HepG2 (cell line): ENCODE measurements at regions of chr16 and their contacts with region 1.

Region 1: DNA sequence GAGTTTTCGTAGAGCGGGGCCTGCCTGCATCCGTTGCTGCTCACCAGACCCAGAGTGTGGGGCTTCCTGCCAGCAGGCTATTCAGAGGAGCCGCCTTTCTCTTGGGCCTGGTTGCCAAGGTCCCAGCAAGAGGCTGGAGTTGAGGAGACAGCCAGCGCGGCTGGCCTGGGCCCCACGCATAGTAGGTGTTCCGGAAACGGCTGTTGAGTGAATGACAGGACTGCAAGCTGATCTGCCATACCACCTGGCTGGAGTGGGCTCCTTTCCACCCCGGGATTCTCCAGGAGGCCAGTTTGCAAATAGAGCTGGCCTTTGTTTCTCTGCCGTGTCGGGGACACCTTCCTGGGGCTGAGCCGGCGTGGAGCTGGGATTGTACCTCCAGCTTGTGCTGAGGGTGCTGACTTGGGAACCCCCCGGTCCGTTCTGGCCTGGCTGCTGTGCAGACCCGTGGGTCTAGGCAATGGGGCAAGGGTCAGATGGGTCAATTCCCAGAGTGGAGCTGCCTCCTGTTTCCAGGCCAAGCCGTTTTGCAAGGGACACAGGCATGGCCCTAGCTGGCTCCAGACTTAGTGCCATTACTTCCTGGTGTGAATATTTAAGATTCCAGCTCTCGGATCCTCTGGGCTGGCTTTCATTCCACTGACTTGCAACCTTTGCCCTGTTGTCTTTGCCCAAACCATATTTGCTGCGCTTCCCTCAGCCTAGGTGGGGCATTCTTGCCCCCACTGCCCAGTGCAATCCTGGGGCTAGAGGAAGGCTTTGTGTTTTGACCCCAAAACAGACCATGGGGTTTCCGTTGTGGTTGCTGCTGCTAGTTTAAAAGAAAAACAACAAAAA is 68.8 kb downstream of the CMIP start:
- DNase-seq: peak; percentile 90
- ATAC-seq: peak; percentile 91
- H3K4me3 ChIP-seq: peak overlapping the region in 1 of 3 experiments; percentile 47; a peak in 2 of 6 replicates
- H3K27ac ChIP-seq: peak overlapping the region; percentile 74
- H3K4me1 ChIP-seq: peaks cover 62% of the 10 kb centered on the region
- H3K27me3 ChIP-seq: no peaks in the 10 kb centered on the region
- CTCF ChIP-seq: no peak
- EP300 ChIP-seq: peak; percentile 46 to 68; a peak in 3 of 4 replicates
- POLR2A ChIP-seq: 0 out of 4 replicates have a peak, but pooled peaks of 1 of the 2 experiments have one; percentile 28
- RAD21 ChIP-seq: peak; percentile 46

Region 2: GRCh38 chr16:81314603-81315270 is 198.7 kb before region 1 on chr16 and contains the start of gene GAN:
- CTCF ChIA-PET with region 1: no interaction called
- POLR2A ChIA-PET with region 1: no interaction called
- in situ Hi-C with region 1: no loop called
- intact Hi-C with region 1: no loop called
- DNase-seq: peak; percentile 95
- ATAC-seq: peak; percentile 96
- H3K4me3 ChIP-seq: peak within 1 kb of the TSS; percentile 88 to 95 (median 93)
- H3K27ac ChIP-seq: peak within 1 kb of the TSS; percentile 80
- H3K4me1 ChIP-seq: peaks cover 52% of the 10 kb centered on the region
- H3K27me3 ChIP-seq: no peaks in the 10 kb centered on the region; a peak in 1 of 5 replicates
- CTCF ChIP-seq: no peak
- EP300 ChIP-seq: 0 out of 4 replicates have a peak, but pooled peaks of 1 of the 2 experiments have one; percentile 41
- POLR2A ChIP-seq: peak; percentile 83 to 90
- RAD21 ChIP-seq: peak; percentile 66
- total RNA-seq, gene GAN: 11.0 and 16.3 TPM in 2 replicates

Region 3: DNA sequence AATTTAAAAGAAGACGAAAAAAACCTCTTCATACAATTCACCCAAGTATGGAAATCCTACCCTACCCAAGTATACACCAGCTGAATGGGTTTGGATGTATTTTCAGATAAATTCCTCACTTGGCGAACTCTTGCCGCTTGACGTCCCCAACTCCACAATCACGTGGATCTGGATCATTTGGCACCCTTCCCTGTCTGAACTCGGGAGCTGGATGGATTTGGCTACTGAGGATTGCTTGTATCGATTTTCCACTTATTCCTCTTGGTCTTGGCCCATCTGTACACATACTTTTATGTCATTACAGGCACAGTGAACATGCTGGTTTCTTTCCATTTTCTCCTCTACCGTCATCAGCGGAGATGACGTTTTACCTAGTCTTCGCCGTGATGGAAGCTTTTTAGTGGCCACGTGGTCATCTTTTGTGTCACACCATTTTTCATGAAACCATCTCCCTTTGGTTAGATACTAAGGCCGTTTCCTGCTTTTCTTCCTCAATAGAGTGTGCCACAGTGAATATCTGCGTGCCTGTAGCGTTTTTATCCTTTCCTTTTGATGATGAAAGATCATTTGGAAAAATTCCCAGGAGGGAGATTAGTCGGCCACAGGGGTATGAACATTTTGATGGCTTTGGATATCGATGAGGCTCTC is 21.8 kb before region 1 on chr16:
- CTCF ChIA-PET with region 1: no interaction called
- POLR2A ChIA-PET with region 1: no interaction called
- in situ Hi-C with region 1: no loop called
- intact Hi-C with region 1: no loop called
- DNase-seq: no peak
- ATAC-seq: no peak
- H3K4me3 ChIP-seq: no peak overlapping the region
- H3K27ac ChIP-seq: no peak overlapping the region
- H3K4me1 ChIP-seq: peaks cover 47% of the 10 kb centered on the region
- H3K27me3 ChIP-seq: no peaks in the 10 kb centered on the region
- CTCF ChIP-seq: no peak
- EP300 ChIP-seq: no peak
- POLR2A ChIP-seq: 0 out of 4 replicates have a peak, but pooled peaks of 1 of the 2 experiments have one; percentile 22
- RAD21 ChIP-seq: no peak

Region 4: GRCh38 chr16:81537721-81538561 is 24.5 kb after region 1 on chr16:
- CTCF ChIA-PET with region 1: no interaction called
- POLR2A ChIA-PET with region 1: interaction called, 12 read pairs
- in situ Hi-C with region 1: no loop called
- intact Hi-C with region 1: loop called (anchors 2 kb)
- DNase-seq: no peak
- ATAC-seq: no peak
- H3K4me3 ChIP-seq: no peak overlapping the region
- H3K27ac ChIP-seq: no peak overlapping the region
- H3K4me1 ChIP-seq: peaks cover 100% of the 10 kb centered on the region
- H3K27me3 ChIP-seq: no peaks in the 10 kb centered on the region
- CTCF ChIP-seq: no peak
- EP300 ChIP-seq: no peak
- POLR2A ChIP-seq: no peak
- RAD21 ChIP-seq: no peak